ENCODE measurements at regions of chr4 and their contacts with region 1.

Region 1: DNA sequence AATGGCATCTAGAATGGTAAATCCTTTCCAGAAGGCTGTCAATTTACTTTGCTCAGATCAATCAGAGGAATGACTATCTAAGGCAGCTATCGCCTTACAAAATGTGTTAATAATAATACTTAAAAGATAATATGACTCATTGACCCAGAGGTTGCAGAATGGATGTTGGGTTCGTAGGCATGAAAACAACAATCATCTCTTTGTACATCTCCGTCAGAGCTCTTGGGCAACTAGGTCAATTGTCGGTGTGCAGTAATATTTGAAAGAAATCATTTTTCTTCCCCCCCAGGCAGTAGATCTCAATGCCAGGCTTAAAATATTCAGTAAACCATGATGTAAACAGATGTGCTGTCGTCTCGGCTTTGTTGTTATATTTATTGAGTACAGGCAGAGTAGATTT is 165.1 kb downstream of the CAMK2D start:
- DNase-seq: no peak
- H3K4me3 Mint-ChIP-seq: no peak overlapping the region
- H3K27ac Mint-ChIP-seq: no peak overlapping the region
- H3K4me1 Mint-ChIP-seq: peaks cover 41% of the 10 kb centered on the region
- H3K27me3 Mint-ChIP-seq: no peaks in the 10 kb centered on the region

Region 2: DNA sequence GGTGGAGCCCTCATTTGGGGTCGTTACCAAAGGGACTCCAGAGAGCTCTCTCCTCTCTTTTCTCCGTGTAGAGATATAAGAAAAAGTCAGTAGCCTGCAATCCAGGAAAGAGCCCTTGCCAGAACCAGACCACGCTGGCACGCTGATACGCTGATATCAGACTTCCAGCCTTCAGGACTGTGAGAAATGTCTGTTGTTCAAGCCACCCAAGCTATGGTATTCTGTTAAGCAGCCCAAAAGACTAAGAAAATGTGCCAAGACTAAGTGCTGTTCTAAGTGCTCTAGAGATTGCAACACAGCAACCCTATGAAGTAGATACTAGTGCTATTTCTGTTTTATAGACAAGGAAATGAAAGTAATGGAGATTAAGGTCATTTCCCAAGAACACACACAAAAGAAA is 40.5 kb before region 1 on chr4:
- intact Hi-C with region 1: loop called (anchors 5 kb)
- DNase-seq: no peak
- H3K4me3 Mint-ChIP-seq: no peak overlapping the region
- H3K27ac Mint-ChIP-seq: no peak overlapping the region
- H3K4me1 Mint-ChIP-seq: peaks cover 21% of the 10 kb centered on the region
- H3K27me3 Mint-ChIP-seq: no peaks in the 10 kb centered on the region

Region 3: GRCh38 chr4:113684534-113685091 is 88.2 kb after region 1 on chr4:
- intact Hi-C with region 1: no loop called
- DNase-seq: no peak
- H3K4me3 Mint-ChIP-seq: peak overlapping the region; percentile 11
- H3K27ac Mint-ChIP-seq: peak overlapping the region; percentile 85
- H3K4me1 Mint-ChIP-seq: peaks cover 57% of the 10 kb centered on the region
- H3K27me3 Mint-ChIP-seq: no peaks in the 10 kb centered on the region